ENCODE measurements at regions of chr1 and their contacts with region 1.

Region 1: GRCh38 chr1:174743654-174744561 is 255.8 kb upstream of the CACYBP start:
- DNase-seq: no peak
- ATAC-seq: peak; percentile 60 to 81 (median 72)
- H3K4me3 ChIP-seq: no peak overlapping the region
- H3K27ac ChIP-seq: no peak overlapping the region
- H3K4me1 ChIP-seq: no peaks in the 10 kb centered on the region
- H3K27me3 ChIP-seq: no peaks in the 10 kb centered on the region
- CTCF ChIP-seq: peak; percentile 49 to 70 (median 70)
- POLR2A ChIP-seq: no peak

Region 2: DNA sequence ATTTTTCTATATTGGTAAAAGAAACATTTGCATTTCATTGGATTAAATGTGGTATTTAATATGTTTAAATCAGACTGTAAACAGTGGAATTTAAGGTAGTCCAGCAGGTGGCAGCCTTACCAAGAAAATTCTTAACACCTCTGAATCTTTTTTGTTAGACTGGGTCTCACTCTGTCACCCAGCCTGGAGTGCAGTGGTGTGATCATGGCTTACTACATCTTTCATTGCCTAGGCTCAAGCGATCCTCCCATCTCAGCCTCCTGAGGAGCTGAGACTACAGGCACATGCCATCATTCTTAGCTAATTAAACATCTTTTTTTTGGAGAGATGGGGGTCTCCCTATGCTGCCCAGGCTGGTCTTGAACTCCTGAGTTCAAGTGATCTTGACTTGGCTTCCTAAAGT is 485.8 kb before region 1 on chr1:
- intact Hi-C with region 1: loop called in 1 of 2 experiments (anchors 10 kb)
- DNase-seq: peak in 1 of 3 donors; percentile 49
- ATAC-seq: peak; percentile 72 to 84 (median 81)
- H3K4me3 ChIP-seq: no peak overlapping the region
- H3K27ac ChIP-seq: no peak overlapping the region
- H3K4me1 ChIP-seq: no peaks in the 10 kb centered on the region
- H3K27me3 ChIP-seq: no peaks in the 10 kb centered on the region
- CTCF ChIP-seq: peak; percentile 59 to 66 (median 62)
- POLR2A ChIP-seq: no peak

Region 3: DNA sequence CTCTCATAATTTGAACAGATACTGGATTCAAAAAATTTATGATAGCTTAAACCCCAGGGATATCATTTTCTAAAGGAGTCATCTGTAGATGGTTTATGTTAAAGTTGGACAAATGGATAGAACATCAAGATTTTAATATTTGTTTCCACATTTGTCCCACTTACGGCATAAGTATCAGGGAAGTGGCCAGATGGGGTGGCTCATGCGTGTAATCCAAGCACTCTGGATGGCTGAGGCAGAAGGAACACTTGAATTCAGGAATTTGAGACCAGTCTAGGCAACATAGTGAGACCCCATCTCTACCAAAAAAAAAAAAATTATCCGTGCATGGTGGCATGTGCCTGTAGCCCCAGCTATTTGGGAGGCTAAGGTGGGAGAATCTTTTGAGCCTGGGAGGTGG is 67.1 kb before region 1 on chr1:
- intact Hi-C with region 1: no loop called
- DNase-seq: no peak
- ATAC-seq: no peak
- H3K4me3 ChIP-seq: no peak overlapping the region
- H3K27ac ChIP-seq: no peak overlapping the region
- H3K4me1 ChIP-seq: no peaks in the 10 kb centered on the region
- H3K27me3 ChIP-seq: no peaks in the 10 kb centered on the region
- CTCF ChIP-seq: no peak
- POLR2A ChIP-seq: no peak

Region 4: GRCh38 chr1:174870319-174870718 is 126.4 kb after region 1 on chr1:
- intact Hi-C with region 1: no loop called
- DNase-seq: no peak
- ATAC-seq: no peak
- H3K4me3 ChIP-seq: no peak overlapping the region
- H3K27ac ChIP-seq: no peak overlapping the region
- H3K4me1 ChIP-seq: peaks cover 0 to 3% (median 0%) of the 10 kb centered on the region in 4 donors
- H3K27me3 ChIP-seq: no peaks in the 10 kb centered on the region
- CTCF ChIP-seq: no peak
- POLR2A ChIP-seq: no peak